Activated CD4-positive, alpha-beta T cell treated with anti-CD3 and anti-CD28 coated beads, Interleukin-2, amount 10 ng/mL, durations not matched to agents 7 days and 5 days (primary cell): ENCODE measurements at regions of chr16 and their contacts with region 1.

Region 1: GRCh38 chr16:28193530-28194423 is 18.0 kb downstream of the XPO6 start:
- DNase-seq: no peak
- H3K4me3 Mint-ChIP-seq: peak overlapping the region; percentile 72
- H3K27ac Mint-ChIP-seq: peak overlapping the region; percentile 97
- H3K4me1 Mint-ChIP-seq: peaks cover 85% of the 10 kb centered on the region
- H3K27me3 Mint-ChIP-seq: no peaks in the 10 kb centered on the region

Region 2: GRCh38 chr16:28211712-28212534 is 18.1 kb after region 1 on chr16 and contains the start of gene XPO6:
- CTCF ChIA-PET with region 1: interaction called, 38 read pairs
- POLR2A ChIA-PET with region 1: interaction called, 3 read pairs
- DNase-seq: peak; percentile 98
- H3K4me3 Mint-ChIP-seq: peak within 1 kb of the TSS; percentile 82
- H3K27ac Mint-ChIP-seq: peak within 1 kb of the TSS; percentile 94
- H3K4me1 Mint-ChIP-seq: peaks cover 33% of the 10 kb centered on the region
- H3K27me3 Mint-ChIP-seq: no peaks in the 10 kb centered on the region
- total RNA-seq, gene XPO6: 237 to 304 TPM

Region 3: GRCh38 chr16:28291873-28292660 is 98.3 kb after region 1 on chr16 and contains the start of gene SBK1:
- CTCF ChIA-PET with region 1: no interaction called
- POLR2A ChIA-PET with region 1: no interaction called
- DNase-seq: peak; percentile 80
- H3K4me3 Mint-ChIP-seq: peak within 1 kb of the TSS; percentile 88
- H3K27ac Mint-ChIP-seq: peak within 1 kb of the TSS; percentile 86
- H3K4me1 Mint-ChIP-seq: peaks cover 67% of the 10 kb centered on the region
- H3K27me3 Mint-ChIP-seq: peaks cover 10% of the 10 kb centered on the region
- total RNA-seq, gene SBK1: 17.9 to 19.4 TPM